Lower leg skin (tissue), 4 donors: ENCODE measurements at regions of chr10 and their contacts with region 1.

Region 1: DNA sequence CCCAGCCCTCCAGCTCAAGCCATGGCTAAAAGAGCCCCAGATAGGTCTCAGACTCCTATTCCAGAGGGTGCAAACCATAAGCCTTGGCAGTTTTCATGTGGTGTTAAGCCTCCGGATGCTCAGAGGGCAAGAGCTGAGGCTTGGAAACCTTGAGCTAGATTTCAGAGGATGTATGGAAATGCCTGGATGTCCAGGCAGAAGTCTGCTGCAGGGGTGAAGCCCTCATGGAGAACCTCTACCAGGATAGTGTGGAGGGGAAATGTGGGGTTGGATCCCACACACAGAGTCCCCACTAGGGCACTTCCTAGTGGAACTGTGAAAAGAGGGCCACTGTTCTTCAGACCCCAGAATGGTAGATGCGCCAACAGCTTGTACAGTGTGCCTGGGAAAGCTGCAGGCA is 13.2 kb upstream of the HPSE2 start:
- DNase-seq: no peak
- H3K4me3 ChIP-seq: no peak overlapping the region
- CTCF ChIP-seq: no peak
- POLR2A ChIP-seq: no peak

Region 2: DNA sequence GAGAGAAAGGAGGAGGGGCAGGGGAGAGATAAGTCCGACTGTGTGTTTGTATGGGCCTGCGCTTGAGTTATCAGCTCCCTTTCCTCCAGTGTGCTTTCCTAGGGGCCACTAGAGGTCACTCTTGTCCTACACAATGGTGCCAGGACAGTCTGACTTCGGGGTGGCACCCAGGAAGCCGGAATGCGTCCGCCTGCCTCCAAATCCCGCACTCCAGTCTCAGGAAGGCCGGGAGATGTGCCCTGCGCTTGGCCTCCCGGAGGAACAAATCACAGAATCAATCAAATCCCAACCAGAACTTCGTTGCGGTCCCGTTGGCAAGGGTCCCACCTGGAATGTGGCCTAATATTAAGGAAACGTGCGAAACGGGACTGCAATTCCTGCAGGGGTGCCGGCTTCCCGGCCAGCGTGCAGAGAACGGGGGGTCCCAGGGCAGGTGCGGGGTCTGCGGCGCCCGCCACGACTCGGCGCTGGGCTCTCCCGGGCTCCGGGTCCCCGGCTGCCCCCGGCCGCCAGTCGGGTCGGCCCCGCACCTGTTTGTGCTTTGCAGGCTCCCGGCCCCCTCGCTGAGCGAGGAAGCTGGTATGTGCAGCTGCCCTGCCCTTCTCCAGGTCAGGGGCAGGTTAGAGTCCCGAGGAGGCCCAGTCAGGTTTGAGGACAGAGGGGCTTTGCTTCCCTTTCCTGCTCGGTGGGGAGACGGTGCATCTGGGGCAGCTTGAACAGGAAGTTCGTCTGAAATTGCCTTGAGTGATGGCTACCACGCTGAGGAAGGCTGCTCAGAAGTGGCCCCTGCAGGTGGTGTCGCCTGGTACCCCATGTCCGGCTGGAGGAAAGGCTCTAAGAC is 781.1 kb before region 1 on chr10:
- intact Hi-C with region 1: loop called (anchors 10 kb)
- DNase-seq: peak; percentile 73 to 94
- H3K4me3 ChIP-seq: peak overlapping the region; percentile 7
- CTCF ChIP-seq: peak in 1 of 3 donors; percentile 83
- POLR2A ChIP-seq: no peak

Region 3: DNA sequence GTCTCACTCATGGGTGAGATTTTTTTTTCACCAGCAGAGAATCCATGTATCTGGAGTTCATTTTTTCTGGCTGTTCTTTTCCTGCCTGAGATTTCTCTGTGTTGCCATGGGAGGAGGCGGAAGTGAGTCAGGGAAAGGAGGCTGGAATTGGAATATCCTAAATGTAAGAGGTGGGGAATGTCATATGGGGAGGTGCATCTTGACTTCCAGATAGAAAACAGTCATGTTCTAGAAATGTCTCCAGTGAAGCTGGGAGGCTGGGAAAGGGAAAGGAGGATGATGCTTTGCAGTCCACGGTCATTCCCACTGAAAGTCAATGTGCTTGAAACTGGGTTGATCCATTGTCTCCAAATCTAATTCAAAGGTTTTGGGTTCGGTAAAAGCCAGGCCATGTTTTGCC is 762.4 kb before region 1 on chr10:
- intact Hi-C with region 1: no loop called
- DNase-seq: peak in 1 of 2 donors; percentile 31
- H3K4me3 ChIP-seq: no peak overlapping the region
- CTCF ChIP-seq: no peak
- POLR2A ChIP-seq: no peak

Region 4: GRCh38 chr10:98848361-98848760 is 400.5 kb before region 1 on chr10:
- intact Hi-C with region 1: no loop called
- DNase-seq: no peak
- H3K4me3 ChIP-seq: no peak overlapping the region
- CTCF ChIP-seq: no peak
- POLR2A ChIP-seq: no peak

Region 5: DNA sequence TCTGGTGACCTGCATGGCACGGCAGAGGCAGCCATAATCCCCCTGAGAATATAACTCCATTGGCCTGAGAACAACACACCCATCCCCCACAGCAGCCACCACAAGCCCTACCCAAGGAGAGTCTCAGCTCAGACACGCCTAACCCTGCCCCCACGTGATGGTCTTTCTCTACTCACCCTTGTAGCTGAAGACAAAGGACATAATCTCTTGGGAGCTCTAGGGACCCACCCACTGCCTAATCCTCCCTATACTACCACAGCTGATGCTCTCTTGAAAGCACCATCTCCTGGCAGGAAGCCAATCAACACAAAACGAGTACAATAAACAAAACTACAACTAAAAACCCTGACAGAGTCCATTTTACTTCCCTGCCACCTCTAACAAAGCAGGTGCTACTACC is 17.6 kb after region 1 on chr10:
- intact Hi-C with region 1: no loop called
- DNase-seq: no peak
- H3K4me3 ChIP-seq: no peak overlapping the region
- CTCF ChIP-seq: no peak
- POLR2A ChIP-seq: no peak